ENCODE measurements at regions of chr1 and their contacts with region 1.

Region 1: GRCh38 chr1:246280551-246280950 is 226.5 kb downstream of the SMYD3 start:
- DNase-seq: peak; percentile 47
- H3K4me3 Mint-ChIP-seq: no peak overlapping the region
- H3K27ac Mint-ChIP-seq: no peak overlapping the region
- H3K4me1 Mint-ChIP-seq: no peaks in the 10 kb centered on the region
- H3K27me3 Mint-ChIP-seq: no peaks in the 10 kb centered on the region
- CTCF ChIP-seq: peak; percentile 43

Region 2: DNA sequence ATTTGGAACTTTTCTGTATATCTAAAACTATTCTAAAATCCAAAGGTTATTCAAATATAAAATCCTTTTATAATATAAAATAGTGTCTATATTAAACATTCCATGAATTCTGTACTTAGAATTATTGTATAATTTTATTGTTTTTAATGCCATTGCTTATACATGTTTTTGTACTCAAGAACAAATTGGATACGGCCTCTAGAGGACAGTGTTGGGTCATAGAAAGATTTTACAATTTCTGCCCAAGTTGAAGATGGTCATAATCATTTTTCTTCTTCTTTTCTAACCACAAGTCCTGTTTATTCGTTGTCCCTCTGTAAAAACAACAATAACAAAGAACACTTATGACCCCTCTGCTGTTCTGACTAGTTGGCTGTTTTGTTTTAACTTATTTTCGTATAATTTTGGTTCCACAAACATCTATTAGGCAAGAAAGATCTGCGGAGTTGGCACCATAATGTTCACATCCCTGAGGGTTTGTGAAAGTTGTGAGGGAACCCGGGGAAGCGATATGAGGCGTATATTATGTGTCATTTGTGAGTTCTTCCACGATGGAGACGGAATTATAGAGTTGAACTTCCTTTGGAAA is 1201.4 kb before region 1 on chr1:
- CTCF ChIA-PET with region 1: interaction called, 3 read pairs
- POLR2A ChIA-PET with region 1: no interaction called
- intact Hi-C with region 1: loop called (anchors 1 kb)
- DNase-seq: peak; percentile 73
- H3K4me3 Mint-ChIP-seq: no peak overlapping the region
- H3K27ac Mint-ChIP-seq: no peak overlapping the region
- H3K4me1 Mint-ChIP-seq: peaks cover 4% of the 10 kb centered on the region
- H3K27me3 Mint-ChIP-seq: no peaks in the 10 kb centered on the region
- CTCF ChIP-seq: peak; percentile 97

Region 3: GRCh38 chr1:245322673-245323441 is 957.7 kb before region 1 on chr1:
- CTCF ChIA-PET with region 1: interaction called, 4 read pairs
- POLR2A ChIA-PET with region 1: no interaction called
- intact Hi-C with region 1: loop called (anchors 2 kb)
- DNase-seq: peak; percentile 55
- H3K4me3 Mint-ChIP-seq: no peak overlapping the region
- H3K27ac Mint-ChIP-seq: no peak overlapping the region
- H3K4me1 Mint-ChIP-seq: no peaks in the 10 kb centered on the region
- H3K27me3 Mint-ChIP-seq: peaks cover 18% of the 10 kb centered on the region
- CTCF ChIP-seq: peak; percentile 46

Region 4: DNA sequence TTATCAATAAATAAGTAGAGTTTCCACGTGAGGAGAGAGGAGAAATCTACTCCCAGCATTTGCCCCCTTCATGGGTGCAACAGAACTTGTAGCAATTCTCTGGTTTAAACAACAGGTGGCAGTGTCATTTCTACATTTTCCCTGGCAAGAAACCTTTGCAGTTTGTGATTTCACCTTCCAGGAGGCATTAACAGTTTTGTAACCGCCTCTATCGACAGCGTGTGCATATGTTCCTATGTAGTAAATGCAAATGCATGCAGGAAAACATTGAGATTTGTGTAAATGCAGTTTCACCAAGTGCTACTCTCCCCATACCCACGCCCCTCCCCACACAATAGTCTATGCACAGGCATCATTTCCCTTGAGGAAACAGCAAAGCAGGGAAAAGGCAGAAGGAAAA is 268.2 kb before region 1 on chr1:
- CTCF ChIA-PET with region 1: interaction called, 35 read pairs
- POLR2A ChIA-PET with region 1: interaction called, 3 read pairs
- intact Hi-C with region 1: loop called (anchors 1 kb)
- DNase-seq: peak; percentile 71
- H3K4me3 Mint-ChIP-seq: no peak overlapping the region
- H3K27ac Mint-ChIP-seq: no peak overlapping the region
- H3K4me1 Mint-ChIP-seq: no peaks in the 10 kb centered on the region
- H3K27me3 Mint-ChIP-seq: no peaks in the 10 kb centered on the region
- CTCF ChIP-seq: peak; percentile 81

Region 5: DNA sequence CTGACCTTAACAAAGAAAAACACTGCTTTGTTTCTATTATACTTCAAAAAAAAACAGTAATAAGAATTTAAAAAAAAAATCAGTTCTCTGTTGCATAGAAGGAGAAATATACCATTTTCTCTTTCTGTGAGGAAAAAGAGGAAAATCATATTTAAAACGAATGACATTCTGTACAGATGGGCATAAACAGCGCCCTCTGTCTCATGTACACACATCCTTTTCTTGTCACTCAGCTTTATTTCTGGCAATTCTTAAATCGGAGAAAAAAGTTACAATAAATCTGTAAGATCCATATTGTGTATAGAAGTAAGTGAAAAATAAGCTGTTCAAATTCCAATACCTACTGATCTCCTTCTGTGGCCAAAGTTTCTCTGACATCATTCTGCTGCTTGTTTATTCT is 18.9 kb before region 1 on chr1:
- CTCF ChIA-PET with region 1: interaction called, 23 read pairs
- POLR2A ChIA-PET with region 1: no interaction called
- intact Hi-C with region 1: no loop called
- DNase-seq: no peak
- H3K4me3 Mint-ChIP-seq: no peak overlapping the region
- H3K27ac Mint-ChIP-seq: no peak overlapping the region
- H3K4me1 Mint-ChIP-seq: no peaks in the 10 kb centered on the region
- H3K27me3 Mint-ChIP-seq: no peaks in the 10 kb centered on the region
- CTCF ChIP-seq: peak; percentile 30

Region 6: GRCh38 chr1:246295968-246296367 is 15.4 kb after region 1 on chr1:
- CTCF ChIA-PET with region 1: interaction called, 14 read pairs
- POLR2A ChIA-PET with region 1: interaction called, 5 read pairs
- intact Hi-C with region 1: no loop called
- DNase-seq: no peak
- H3K4me3 Mint-ChIP-seq: no peak overlapping the region
- H3K27ac Mint-ChIP-seq: no peak overlapping the region
- H3K4me1 Mint-ChIP-seq: peaks cover 16% of the 10 kb centered on the region
- H3K27me3 Mint-ChIP-seq: no peaks in the 10 kb centered on the region
- CTCF ChIP-seq: no peak

Measured in MCF 10A (cell line).